ENCODE measurements at regions of chr9 and their contacts with region 1.

Region 1: GRCh38 chr9:92325269-92325990 is at the starts of genes CENPP and NOL8:
- DNase-seq: peak; percentile 91
- H3K4me3 ChIP-seq: peak within 1 kb of the TSS; percentile 80 to 99 (median 93)
- H3K27ac ChIP-seq: peak within 1 kb of the TSS; percentile 98
- H3K4me1 ChIP-seq: peaks cover 27% of the 10 kb centered on the region
- H3K27me3 ChIP-seq: no peaks in the 10 kb centered on the region
- CTCF ChIP-seq: no peak
- total RNA-seq, gene CENPP: 3.0 to 7.5 TPM
- total RNA-seq, gene NOL8: 21.8 to 42.4 TPM

Region 2: DNA sequence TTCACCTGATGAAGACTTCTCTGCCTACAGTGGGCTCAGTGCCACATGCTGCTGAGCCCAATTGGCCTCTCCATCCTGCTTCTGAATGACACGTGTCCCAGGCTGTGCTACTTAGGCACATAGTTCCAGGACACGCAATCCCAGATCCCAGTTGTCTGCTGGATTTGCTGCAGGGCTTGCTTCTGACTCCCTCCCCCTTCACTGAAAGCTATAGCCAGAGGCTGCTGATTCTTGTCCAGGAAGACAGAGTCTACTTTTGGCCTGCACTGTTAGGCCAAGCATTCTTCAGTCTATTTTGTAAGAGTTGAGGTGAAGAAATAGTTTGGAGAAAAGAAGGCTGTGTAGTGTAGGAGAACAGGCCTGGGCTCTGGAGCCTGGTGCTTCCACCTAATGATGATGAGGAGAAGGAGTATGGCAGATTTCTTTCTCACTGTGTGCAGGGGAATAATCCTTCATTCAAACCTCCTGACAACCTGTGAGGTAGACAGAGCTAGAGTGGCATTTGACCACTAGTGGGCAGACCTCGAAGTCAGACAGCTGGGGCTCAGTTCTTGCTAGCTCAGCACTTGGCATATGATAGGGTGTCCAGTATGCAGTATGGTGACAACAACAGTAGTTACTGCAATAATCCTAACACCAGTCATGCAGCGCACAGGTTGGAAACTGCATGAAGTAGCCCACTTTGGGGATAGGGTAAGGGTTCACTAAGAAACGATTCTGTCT is 176.4 kb after region 1 on chr9:
- CTCF ChIA-PET with region 1: interaction called, 3 read pairs
- dilution Hi-C with region 1: no loop called
- in situ Hi-C with region 1: no loop called
- intact Hi-C with region 1: loop called (anchors 1 kb)
- DNase-seq: peak; percentile 38
- H3K4me3 ChIP-seq: no peak overlapping the region
- H3K27ac ChIP-seq: no peak overlapping the region
- H3K4me1 ChIP-seq: peaks cover 29% of the 10 kb centered on the region
- H3K27me3 ChIP-seq: no peaks in the 10 kb centered on the region
- CTCF ChIP-seq: peak; percentile 62 to 73

Region 3: DNA sequence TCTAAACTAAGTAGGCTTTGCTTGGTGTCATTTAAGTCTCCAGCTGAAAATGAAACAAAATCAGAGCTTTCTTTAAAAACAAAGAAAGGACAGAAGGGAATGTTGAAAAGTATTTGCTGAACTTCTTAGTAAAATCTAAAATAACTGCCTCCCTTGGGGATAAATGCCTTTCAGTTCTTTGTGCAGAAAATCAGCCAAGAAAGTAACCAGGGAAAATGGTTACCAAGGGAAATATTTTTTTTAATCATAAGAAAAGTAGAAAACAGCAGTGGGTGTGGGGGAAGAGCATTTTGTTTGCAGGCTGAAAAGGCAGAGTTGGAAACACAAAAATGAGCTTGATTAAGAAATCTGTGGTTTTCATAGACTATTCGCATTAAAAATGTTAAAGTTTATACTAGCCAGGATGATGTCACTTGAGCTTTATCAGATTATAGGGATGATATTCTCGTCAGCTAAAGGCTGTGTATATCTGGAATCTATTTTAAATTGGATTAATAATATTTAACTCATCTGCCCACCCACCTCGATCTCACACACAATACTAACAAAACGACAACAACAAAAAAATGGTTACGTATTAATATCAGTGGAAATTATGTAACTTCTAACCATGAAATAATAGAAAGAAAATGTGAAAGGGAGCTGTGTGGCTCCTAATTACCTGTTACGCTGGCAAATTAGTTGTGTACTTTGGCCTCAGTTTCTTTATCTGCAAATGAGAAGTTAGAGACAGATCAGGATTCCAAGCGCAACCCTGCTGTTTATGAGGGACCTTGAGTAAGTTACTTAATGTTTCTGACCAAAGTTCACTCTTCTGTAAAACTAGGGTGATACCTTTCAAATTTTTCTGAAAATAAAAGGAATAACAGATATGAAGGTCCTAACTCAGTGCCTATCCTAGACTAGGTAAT is 210.8 kb after region 1 on chr9 and contains the start of gene ECM2:
- CTCF ChIA-PET with region 1: no interaction called
- dilution Hi-C with region 1: no loop called
- in situ Hi-C with region 1: no loop called
- intact Hi-C with region 1: loop called (anchors 5 kb)
- DNase-seq: no peak
- H3K4me3 ChIP-seq: peak within 1 kb of the TSS in 1 of 3 experiments; percentile 16
- H3K27ac ChIP-seq: no peak within 1 kb of the TSS
- H3K4me1 ChIP-seq: no peaks in the 10 kb centered on the region
- H3K27me3 ChIP-seq: no peaks in the 10 kb centered on the region
- CTCF ChIP-seq: no peak
- total RNA-seq, gene ECM2: 1.3 to 2.1 TPM

Measured in mammary epithelial cell (primary cell).